ENCODE measurements at regions of chr5 and their contacts with region 1.

Region 1: GRCh38 chr5:172179361-172179989 is 8.5 kb downstream of the STK10 start:
- DNase-seq: peak; percentile 71
- ATAC-seq: peak; percentile 21
- H3K4me3 Mint-ChIP-seq: peak overlapping the region; percentile 83
- H3K27ac Mint-ChIP-seq: peak overlapping the region; percentile 94
- H3K4me1 Mint-ChIP-seq: peaks cover 81% of the 10 kb centered on the region
- H3K27me3 Mint-ChIP-seq: no peaks in the 10 kb centered on the region
- CTCF ChIP-seq: no peak

Region 2: GRCh38 chr5:172106511-172107356 is 72.7 kb before region 1 on chr5:
- CTCF ChIA-PET with region 1: interaction called, 129 read pairs
- POLR2A ChIA-PET with region 1: interaction called, 36 read pairs
- intact Hi-C with region 1: no loop called
- DNase-seq: peak; percentile 74
- ATAC-seq: no peak
- H3K4me3 Mint-ChIP-seq: no peak overlapping the region
- H3K27ac Mint-ChIP-seq: peak overlapping the region; percentile 84
- H3K4me1 Mint-ChIP-seq: peaks cover 60% of the 10 kb centered on the region
- H3K27me3 Mint-ChIP-seq: no peaks in the 10 kb centered on the region
- CTCF ChIP-seq: peak; percentile 98

Region 3: DNA sequence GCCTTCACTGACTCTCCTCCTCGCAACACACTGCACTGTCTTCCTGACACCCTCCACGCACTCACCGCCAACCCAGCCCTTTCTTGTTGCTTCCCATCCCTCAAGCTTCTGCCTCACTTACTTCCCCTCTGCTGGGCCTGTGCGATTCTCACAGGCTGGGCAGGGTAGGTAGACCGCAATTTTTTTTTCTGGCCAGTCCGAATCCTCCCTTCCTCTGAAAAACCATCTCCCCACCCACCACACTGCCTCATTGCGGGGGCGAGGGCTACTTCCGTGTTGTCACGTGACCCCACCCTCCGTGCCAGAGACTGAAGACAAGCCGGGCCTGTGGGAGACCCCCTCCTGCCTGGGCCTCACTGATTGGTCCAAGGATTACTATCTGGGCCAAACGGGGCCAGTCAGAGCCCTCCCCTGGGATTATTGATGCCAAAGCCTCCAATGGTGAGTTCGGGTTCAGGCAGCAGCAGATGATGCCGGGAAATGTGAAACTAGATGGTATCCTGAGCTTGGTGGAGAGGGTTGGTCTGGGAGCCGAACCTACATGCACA is 64.5 kb before region 1 on chr5:
- CTCF ChIA-PET with region 1: interaction called, 12 read pairs
- POLR2A ChIA-PET with region 1: interaction called, 36 read pairs
- intact Hi-C with region 1: loop called (anchors 2 kb)
- DNase-seq: peak; percentile 98
- ATAC-seq: peak; percentile 71
- H3K4me3 Mint-ChIP-seq: peak overlapping the region; percentile 80
- H3K27ac Mint-ChIP-seq: peak overlapping the region; percentile 99
- H3K4me1 Mint-ChIP-seq: peaks cover 74% of the 10 kb centered on the region
- H3K27me3 Mint-ChIP-seq: no peaks in the 10 kb centered on the region
- CTCF ChIP-seq: no peak

Region 4: DNA sequence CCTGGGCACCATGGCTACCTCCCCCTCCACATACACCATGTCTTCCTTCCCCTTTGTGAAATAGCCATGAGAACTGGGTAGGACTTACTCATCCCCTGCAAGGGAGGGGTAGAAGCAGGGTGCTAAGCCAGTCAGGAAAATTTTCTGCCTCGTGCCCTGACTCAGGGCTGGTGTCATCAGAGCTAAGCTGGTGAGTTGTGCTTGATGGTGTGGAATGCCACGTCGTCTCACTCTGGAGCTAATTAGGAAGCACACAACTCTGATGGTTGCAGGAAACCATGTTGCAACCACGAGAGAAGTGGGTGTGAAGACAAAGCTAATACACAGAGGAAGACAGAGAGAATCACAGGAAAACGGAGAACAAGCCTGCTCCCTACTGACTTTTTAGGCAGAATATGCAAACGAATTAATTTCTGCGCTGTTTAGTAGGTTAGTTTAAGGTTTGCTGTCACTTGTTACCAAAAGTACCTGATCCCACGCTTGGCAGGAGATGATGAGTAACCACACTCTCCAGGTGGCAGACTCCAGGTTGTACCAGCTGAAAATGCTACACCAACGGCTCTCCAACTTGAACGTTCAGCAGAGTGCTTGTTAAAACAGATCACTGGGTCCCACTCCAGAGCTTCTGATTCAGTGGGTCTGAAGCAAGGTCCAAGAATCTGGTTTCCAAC is 46.0 kb before region 1 on chr5:
- CTCF ChIA-PET with region 1: interaction called, 4 read pairs
- POLR2A ChIA-PET with region 1: interaction called, 11 read pairs
- intact Hi-C with region 1: no loop called
- DNase-seq: peak; percentile 81
- ATAC-seq: peak; percentile 96
- H3K4me3 Mint-ChIP-seq: peak overlapping the region; percentile 42
- H3K27ac Mint-ChIP-seq: peak overlapping the region; percentile 97
- H3K4me1 Mint-ChIP-seq: peaks cover 62% of the 10 kb centered on the region
- H3K27me3 Mint-ChIP-seq: no peaks in the 10 kb centered on the region
- CTCF ChIP-seq: no peak

Region 5: GRCh38 chr5:172150514-172151425 is 28.7 kb before region 1 on chr5:
- CTCF ChIA-PET with region 1: interaction called, 3 read pairs
- POLR2A ChIA-PET with region 1: interaction called, 32 read pairs
- intact Hi-C with region 1: no loop called
- DNase-seq: peak; percentile 56
- ATAC-seq: peak; percentile 70
- H3K4me3 Mint-ChIP-seq: peak overlapping the region; percentile 63
- H3K27ac Mint-ChIP-seq: peak overlapping the region; percentile 91
- H3K4me1 Mint-ChIP-seq: peaks cover 68% of the 10 kb centered on the region
- H3K27me3 Mint-ChIP-seq: no peaks in the 10 kb centered on the region
- CTCF ChIP-seq: no peak

Region 6: DNA sequence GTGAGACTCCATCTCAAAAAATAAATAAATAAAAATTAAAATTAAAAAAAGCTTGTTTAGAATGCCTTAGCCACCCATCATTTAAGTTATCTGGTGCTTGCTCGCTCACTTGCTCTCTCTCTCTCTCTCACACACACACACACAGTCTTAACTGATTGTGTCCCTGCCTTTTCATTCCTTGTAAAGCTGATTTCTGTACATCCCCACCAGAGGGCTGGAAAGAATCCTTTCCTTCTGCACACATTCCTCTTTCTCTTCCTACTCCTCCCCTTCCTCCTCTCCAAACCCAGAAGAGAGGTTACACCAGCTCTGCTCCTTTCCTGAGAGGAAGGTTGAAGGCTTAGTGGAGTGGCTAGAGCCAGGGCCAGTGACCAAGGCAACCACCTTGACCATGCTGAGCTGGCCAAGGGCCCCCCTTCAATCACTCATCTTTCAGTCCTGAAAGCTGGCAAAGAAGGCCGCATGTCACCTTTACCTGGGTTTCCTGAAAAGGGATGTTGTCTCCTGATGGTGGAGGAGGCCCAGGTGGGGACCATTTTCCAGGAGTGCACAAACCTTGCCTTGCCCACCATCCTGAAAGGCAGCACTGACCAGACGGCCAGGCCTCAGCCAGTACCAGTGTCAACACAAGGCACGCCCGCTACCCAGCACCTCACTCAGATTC is 17.0 kb before region 1 on chr5:
- CTCF ChIA-PET with region 1: interaction called, 4 read pairs
- POLR2A ChIA-PET with region 1: interaction called, 51 read pairs
- intact Hi-C with region 1: no loop called
- DNase-seq: no peak
- ATAC-seq: no peak
- H3K4me3 Mint-ChIP-seq: no peak overlapping the region
- H3K27ac Mint-ChIP-seq: peak overlapping the region; percentile 51
- H3K4me1 Mint-ChIP-seq: peaks cover 64% of the 10 kb centered on the region
- H3K27me3 Mint-ChIP-seq: no peaks in the 10 kb centered on the region
- CTCF ChIP-seq: no peak

Region 7: DNA sequence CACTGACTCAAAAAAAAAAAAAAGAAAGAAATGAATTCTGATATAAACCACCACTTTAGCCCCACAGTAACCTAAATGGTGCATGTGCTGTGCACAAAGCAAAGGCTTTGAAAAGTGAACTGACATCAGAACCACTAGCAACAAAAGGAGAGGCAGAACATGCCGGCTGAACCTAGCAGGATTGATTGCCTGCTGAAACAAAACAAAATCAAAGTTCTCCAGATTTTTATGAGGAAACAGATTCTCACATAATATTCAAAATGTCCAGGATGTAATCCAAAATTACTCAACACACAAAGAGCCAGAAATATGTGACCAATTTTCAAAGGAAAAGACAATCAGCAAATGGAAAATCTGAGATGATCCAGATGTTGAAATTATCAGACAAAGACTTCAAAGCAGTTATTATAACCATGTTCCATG is 66.2 kb after region 1 on chr5:
- CTCF ChIA-PET with region 1: no interaction called
- POLR2A ChIA-PET with region 1: no interaction called
- intact Hi-C with region 1: no loop called
- DNase-seq: no peak
- ATAC-seq: no peak
- H3K4me3 Mint-ChIP-seq: no peak overlapping the region
- H3K27ac Mint-ChIP-seq: no peak overlapping the region
- H3K4me1 Mint-ChIP-seq: peaks cover 12% of the 10 kb centered on the region
- H3K27me3 Mint-ChIP-seq: no peaks in the 10 kb centered on the region
- CTCF ChIP-seq: no peak

Measured in activated CD8-positive, alpha-beta T cell treated with anti-CD3 and anti-CD28 coated beads for 36 hours (primary cell).